PC-9 (cell line): ENCODE measurements at regions of chr10 and their contacts with region 1.

Region 1: DNA sequence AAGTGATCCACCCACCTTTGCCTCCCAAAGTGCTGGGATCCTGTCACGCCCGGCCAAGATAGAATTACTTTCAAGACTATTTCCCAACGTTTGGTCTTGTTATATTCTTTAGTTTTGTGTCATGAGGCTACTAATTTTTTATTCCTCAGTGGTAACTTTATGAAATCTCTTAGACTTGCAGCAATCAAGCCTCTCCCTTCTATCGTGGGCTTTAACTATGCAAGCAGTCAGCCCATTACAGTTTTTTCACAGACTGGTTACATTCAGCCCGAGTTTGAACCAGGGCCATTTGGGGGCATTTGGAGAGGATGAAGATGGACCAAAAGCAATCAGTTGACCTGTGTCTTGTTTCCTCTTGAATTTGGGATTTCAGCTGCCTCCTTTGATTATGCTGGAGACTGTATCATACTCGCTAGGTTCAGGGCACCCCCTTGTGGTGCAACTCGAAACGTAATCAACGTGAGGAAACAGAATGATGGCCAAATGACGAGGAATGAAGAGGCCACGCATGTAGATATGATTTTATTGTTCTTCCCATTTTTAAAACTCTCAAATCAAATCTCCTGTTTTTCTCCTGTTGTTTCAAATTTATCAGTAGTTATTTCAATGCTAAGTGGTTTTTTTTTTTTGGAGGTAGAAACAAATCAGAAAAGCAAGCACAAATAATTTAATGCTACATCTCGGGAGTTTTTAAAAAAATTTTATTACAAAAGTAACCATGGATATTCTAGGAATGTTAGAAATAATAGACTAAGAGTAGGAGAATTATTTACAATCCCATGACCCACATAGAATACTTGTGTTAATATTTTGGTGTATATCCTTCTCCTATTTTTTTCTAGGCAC is 151.6 kb downstream of the KIAA1217 start:
- DNase-seq: peak; percentile 40 to 61
- H3K4me3 ChIP-seq: no peak overlapping the region
- H3K27ac ChIP-seq: no peak overlapping the region
- H3K4me1 ChIP-seq: no peaks in the 10 kb centered on the region
- H3K27me3 ChIP-seq: no peaks in the 10 kb centered on the region
- CTCF ChIP-seq: peak; percentile 77

Region 2: GRCh38 chr10:24201503-24202180 is 158.9 kb before region 1 on chr10:
- CTCF ChIA-PET with region 1: no interaction called
- POLR2A ChIA-PET with region 1: no interaction called
- intact Hi-C with region 1: loop called (anchors 2 kb)
- DNase-seq: no peak
- H3K4me3 ChIP-seq: no peak overlapping the region
- H3K27ac ChIP-seq: no peak overlapping the region
- H3K4me1 ChIP-seq: peaks cover 8% of the 10 kb centered on the region
- H3K27me3 ChIP-seq: no peaks in the 10 kb centered on the region
- CTCF ChIP-seq: no peak

Region 3: DNA sequence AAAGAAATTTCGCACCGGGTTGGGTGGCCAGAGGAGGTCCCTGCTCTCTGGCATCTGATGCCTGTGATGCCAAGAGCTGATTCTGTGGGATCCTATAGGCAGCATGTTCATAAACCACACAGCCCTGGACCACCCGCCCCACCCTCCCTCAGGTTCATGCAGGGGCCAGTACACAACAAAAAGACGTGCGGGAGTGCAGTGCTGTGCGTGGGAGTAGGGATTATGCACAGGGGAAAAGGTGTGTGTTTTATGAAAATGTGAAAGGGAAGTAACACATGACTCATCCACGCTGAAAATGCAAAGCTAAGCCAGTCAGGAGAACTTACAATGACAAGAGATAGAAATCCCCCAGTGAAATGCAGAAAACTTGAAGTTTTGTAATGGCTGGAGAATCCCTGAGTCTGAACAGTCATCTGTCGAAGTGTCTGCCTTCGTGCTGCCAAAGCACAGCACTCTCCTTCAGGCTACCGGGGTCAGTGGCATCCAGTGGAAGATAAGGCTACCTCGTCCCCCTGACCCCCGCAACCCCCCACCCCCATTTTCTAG is 150.5 kb before region 1 on chr10:
- CTCF ChIA-PET with region 1: no interaction called
- POLR2A ChIA-PET with region 1: no interaction called
- intact Hi-C with region 1: loop called (anchors 1 kb)
- DNase-seq: peak in 1 of 2 experiments; percentile 53
- H3K4me3 ChIP-seq: peak overlapping the region; percentile 47; the same call in 1 of the 2 replicates
- H3K27ac ChIP-seq: 0 out of 2 replicates have a peak overlapping the region, but pooled peaks have one; percentile 77
- H3K4me1 ChIP-seq: peaks cover 38% of the 10 kb centered on the region
- H3K27me3 ChIP-seq: no peaks in the 10 kb centered on the region
- CTCF ChIP-seq: no peak

Region 4: GRCh38 chr10:24229909-24230308 is 130.6 kb before region 1 on chr10:
- CTCF ChIA-PET with region 1: no interaction called
- POLR2A ChIA-PET with region 1: no interaction called
- intact Hi-C with region 1: no loop called
- DNase-seq: no peak
- H3K4me3 ChIP-seq: no peak overlapping the region
- H3K27ac ChIP-seq: no peak overlapping the region
- H3K4me1 ChIP-seq: no peaks in the 10 kb centered on the region
- H3K27me3 ChIP-seq: no peaks in the 10 kb centered on the region
- CTCF ChIP-seq: no peak

Region 5: GRCh38 chr10:24249829-24250415 is 110.6 kb before region 1 on chr10:
- CTCF ChIA-PET with region 1: no interaction called
- POLR2A ChIA-PET with region 1: no interaction called
- intact Hi-C with region 1: loop called (anchors 5 kb)
- DNase-seq: peak in 1 of 2 experiments; percentile 51
- H3K4me3 ChIP-seq: no peak overlapping the region
- H3K27ac ChIP-seq: 0 out of 2 replicates have a peak overlapping the region, but pooled peaks have one; percentile 17
- H3K4me1 ChIP-seq: peaks cover 40% of the 10 kb centered on the region
- H3K27me3 ChIP-seq: no peaks in the 10 kb centered on the region
- CTCF ChIP-seq: no peak

Region 6: DNA sequence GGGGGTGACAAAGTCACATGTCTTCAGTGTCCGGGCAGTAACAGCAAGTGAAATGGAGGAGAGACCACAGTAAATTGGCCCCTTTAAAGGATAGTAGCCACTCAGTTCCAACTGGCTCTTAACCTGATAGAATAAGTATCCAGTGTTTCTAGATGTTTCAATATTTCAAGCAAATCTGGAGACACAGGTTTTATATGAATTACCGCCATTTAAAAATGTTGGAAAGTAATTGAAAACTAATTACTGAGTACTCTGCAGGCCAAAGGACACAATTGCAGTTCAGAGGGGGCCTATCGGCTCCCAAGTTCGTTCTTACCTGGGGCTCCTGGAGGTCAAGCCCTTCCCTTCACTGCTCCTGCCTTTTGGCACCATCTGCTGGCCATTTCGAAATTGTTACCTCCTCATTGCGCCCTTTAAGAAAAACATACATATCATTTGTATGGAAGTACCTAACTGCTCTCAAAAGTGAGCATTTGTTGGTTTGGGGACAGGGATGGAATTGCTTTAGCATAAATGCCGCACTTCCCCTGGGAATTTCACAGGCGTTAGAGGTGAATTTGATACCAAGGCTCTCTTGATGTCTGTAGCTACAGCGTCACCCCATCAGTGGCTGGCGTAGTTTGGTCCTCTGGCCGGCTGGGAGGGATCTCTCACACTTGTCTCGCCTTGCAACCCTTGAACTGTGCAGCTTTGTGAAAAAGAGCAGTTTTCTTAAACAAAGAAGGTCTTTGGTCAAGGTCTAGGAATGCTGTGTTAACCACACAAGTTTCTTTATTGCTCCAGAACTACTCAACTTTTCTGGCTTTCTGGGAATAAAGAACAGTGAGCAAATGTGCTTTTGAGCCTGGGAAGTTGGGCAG is 143.2 kb after region 1 on chr10:
- CTCF ChIA-PET with region 1: interaction called, 8 read pairs
- POLR2A ChIA-PET with region 1: no interaction called
- intact Hi-C with region 1: loop called (anchors 1 kb)
- DNase-seq: peak in 1 of 2 experiments; percentile 40
- H3K4me3 ChIP-seq: no peak overlapping the region
- H3K27ac ChIP-seq: no peak overlapping the region
- H3K4me1 ChIP-seq: no peaks in the 10 kb centered on the region
- H3K27me3 ChIP-seq: no peaks in the 10 kb centered on the region
- CTCF ChIP-seq: peak; percentile 74